Breast epithelium (tissue), 4 donors: ENCODE measurements at regions of chr4 and their contacts with region 1.

Region 1: GRCh38 chr4:55500072-55500471 is 46.6 kb downstream of the CLOCK start:
- DNase-seq: no peak
- H3K4me3 ChIP-seq: no peak overlapping the region
- H3K27ac ChIP-seq: no peak overlapping the region
- H3K4me1 ChIP-seq: no peaks in the 10 kb centered on the region
- H3K27me3 ChIP-seq: no peaks in the 10 kb centered on the region
- CTCF ChIP-seq: no peak
- POLR2A ChIP-seq: no peak

Region 2: GRCh38 chr4:55475394-55476243 is 24.5 kb before region 1 on chr4:
- intact Hi-C with region 1: loop called (anchors 1 kb)
- DNase-seq: no peak
- H3K4me3 ChIP-seq: no peak overlapping the region
- H3K27ac ChIP-seq: no peak overlapping the region
- H3K4me1 ChIP-seq: no peaks in the 10 kb centered on the region
- H3K27me3 ChIP-seq: no peaks in the 10 kb centered on the region
- CTCF ChIP-seq: no peak
- POLR2A ChIP-seq: no peak